ENCODE measurements at regions of chr6 and their contacts with region 1.

Region 1: DNA sequence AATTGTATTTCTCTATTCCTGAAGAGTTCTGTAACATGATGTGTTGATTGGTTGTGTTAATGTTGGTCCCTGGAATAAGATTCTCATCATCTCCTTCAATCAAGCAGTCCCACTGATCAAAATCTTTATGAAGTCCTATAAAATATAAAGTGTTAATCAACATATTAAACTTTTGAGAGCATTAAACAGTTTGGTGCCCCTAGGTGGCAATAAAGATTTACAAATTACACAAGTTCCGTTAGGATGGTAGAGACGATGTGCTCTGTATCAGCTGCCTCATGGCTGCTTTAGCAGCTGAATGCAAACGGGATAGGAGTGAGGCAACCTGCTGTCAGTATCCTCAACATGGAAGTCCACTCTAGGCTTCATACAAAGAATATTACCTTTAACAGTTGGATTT is 16.9 kb downstream of the TDRD6 start:
- DNase-seq: no peak
- ATAC-seq: peak; percentile 63

Region 2: DNA sequence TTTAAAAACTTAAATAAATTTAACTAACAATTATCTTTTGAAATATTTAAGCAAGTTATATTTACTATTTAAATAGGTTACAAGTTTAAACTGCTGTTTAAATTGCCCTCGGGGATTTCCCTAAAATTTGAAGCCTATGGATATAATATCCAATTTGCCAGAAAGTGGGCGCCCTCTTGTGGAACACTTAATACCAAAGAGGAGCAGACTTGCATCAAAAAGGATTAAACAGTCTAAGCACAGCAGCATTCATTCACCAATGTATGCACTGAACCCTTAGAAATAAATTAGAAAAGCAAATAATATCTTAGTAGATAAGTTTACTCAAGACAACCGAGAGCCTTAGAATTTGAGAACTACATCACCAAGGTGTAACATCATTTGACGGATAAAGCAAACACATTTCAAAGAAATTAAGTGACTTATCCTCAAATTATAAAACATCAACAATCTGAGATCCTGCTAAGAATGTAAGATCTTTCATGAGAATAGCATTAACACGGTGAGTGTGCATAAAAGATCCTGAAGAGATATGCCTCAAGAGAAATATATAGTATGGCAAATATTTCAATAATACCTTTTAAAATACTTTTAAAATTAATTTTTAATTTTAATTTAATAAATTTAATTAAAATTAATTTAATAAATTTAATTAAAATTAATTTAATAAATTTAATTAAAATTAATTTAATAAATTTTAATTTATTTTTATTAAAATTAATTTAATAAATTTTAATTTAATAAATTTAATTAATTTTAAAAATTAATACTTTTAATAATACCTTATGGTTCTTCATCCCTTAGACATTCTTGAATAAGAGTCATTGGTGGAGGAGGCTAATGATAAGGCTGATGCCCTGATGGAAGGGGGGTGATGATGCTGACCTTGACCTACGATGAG is 77.2 kb after region 1 on chr6:
- intact Hi-C with region 1: loop called (anchors 2 kb)
- DNase-seq: no peak
- ATAC-seq: no peak

Measured in left ventricle myocardium superior (tissue), 1 donor.